Mammary epithelial cell (primary cell): ENCODE measurements at regions of chr13 and their contacts with region 1.

Region 1: GRCh38 chr13:73608711-73609485 is 525.3 kb downstream of the KLF12 start:
- DNase-seq: no peak
- H3K4me3 ChIP-seq: no peak overlapping the region
- H3K27ac ChIP-seq: no peak overlapping the region
- H3K4me1 ChIP-seq: peaks cover 9% of the 10 kb centered on the region
- H3K27me3 ChIP-seq: no peaks in the 10 kb centered on the region
- CTCF ChIP-seq: no peak

Region 2: DNA sequence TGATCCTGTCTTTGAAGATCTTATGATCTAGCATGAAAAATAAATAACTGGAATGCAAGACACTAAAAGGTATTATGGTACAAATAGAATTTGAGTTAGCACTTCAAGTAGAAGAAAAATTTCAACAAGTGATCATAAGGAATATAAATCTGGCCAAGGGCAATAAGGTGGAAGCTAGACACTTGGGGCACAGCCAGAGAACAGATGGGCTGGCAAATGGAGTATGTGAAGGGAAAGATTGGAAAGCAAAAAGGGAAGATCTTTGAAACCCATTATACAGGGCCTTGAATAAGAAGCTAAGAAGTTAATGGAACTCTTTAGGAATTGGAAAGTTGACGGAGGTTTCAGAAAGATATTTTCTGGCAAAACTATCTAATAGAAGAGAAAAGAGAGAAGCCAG is 942.5 kb before region 1 on chr13:
- CTCF ChIA-PET with region 1: no interaction called
- dilution Hi-C with region 1: no loop called
- in situ Hi-C with region 1: no loop called
- intact Hi-C with region 1: no loop called
- DNase-seq: no peak
- H3K4me3 ChIP-seq: no peak overlapping the region
- H3K27ac ChIP-seq: no peak overlapping the region
- H3K4me1 ChIP-seq: no peaks in the 10 kb centered on the region
- H3K27me3 ChIP-seq: no peaks in the 10 kb centered on the region
- CTCF ChIP-seq: no peak

Region 3: GRCh38 chr13:73684286-73684685 is 75.4 kb after region 1 on chr13:
- CTCF ChIA-PET with region 1: no interaction called
- dilution Hi-C with region 1: loop called (anchors 5 kb)
- in situ Hi-C with region 1: no loop called
- intact Hi-C with region 1: no loop called
- DNase-seq: no peak
- H3K4me3 ChIP-seq: no peak overlapping the region
- H3K27ac ChIP-seq: peak overlapping the region; percentile 2
- H3K4me1 ChIP-seq: no peaks in the 10 kb centered on the region
- H3K27me3 ChIP-seq: no peaks in the 10 kb centered on the region
- CTCF ChIP-seq: no peak

Region 4: DNA sequence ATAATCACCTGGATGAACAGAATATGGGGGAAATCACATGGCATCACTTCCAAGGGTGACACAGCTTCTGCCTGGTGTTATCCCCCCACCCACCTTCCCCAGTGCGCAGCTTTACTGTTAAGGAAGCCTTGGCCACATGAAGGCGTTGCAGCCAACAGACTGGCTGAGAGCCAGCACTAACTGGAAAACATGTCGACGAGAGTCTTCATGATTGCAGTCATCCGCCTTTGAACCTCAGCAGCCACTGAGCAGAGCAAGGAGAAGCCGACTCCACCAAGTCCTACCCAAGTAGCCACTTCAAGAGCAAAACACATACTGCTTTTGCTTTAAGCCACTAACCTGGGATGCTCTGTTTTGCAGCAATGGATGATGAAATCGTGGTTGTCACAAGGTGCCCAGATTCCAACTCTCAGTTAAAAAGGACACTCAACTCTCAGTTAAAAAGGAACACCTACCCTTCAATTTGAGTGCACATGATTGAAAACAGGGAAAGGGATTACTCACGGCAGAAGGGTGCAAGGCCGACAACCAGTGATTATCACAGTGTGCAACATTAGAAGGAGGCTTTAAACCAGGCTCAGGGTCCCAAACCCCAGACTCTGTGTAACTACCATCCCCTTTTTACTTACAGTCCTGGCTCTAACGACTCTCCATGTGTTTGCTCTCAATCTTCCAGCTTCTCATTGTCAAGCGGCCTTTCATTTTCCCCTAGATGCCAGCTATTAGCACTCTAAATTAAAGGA is 376.2 kb after region 1 on chr13:
- CTCF ChIA-PET with region 1: no interaction called
- dilution Hi-C with region 1: no loop called
- in situ Hi-C with region 1: no loop called
- intact Hi-C with region 1: no loop called
- DNase-seq: no peak
- H3K4me3 ChIP-seq: no peak overlapping the region
- H3K27ac ChIP-seq: no peak overlapping the region
- H3K4me1 ChIP-seq: no peaks in the 10 kb centered on the region
- H3K27me3 ChIP-seq: no peaks in the 10 kb centered on the region
- CTCF ChIP-seq: no peak